GM12878 (cell line): ENCODE measurements at regions of chr2 and their contacts with region 1.

Region 1: DNA sequence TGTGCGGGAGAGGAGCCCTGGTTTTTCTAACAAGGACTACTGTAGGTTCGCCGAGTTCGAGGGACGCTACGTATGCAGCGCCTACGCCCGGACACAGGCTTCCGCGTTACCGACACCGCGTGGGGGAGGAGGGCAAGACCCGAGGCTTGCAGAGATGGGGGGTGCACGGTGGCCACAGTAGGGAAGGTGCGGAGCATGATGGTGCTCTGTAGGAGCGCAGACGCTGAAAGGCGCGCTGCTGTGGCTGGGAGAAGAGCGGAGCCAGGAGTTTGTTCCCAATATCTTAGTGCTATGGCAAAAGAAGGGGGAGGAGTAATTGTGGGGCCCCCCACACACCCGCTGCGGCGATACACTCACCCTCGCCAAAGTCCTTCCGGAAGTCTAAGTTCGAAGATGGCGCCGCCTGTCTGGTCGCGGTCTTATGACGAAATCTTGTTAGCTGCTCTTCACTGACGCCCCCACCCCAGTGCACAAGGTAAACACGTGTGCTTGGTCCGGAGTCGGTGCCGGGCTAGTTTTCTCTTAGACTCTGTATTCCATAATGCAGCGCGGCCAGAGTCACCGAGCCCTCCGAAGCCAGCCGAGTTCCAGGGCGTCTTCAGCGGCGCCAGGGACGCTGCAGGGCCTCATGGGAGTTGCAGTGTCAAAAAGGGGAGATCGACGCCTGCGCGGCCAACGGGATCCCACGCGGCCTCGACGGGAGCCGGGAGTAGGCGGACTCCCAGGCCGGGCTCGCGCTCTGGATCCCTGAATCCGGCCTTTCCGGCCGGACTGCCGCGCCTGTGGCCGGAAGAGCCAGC is at the start of gene GTF3C2:
- DNase-seq: peak; percentile 88
- ATAC-seq: peak; percentile 91
- H3K4me3 ChIP-seq: peak within 1 kb of the TSS; percentile 97
- H3K27ac ChIP-seq: peak within 1 kb of the TSS; percentile 96
- H3K4me1 ChIP-seq: no peaks in the 10 kb centered on the region; the same call in 1 of the 2 replicates
- H3K27me3 ChIP-seq: no peaks in the 10 kb centered on the region
- CTCF ChIP-seq: no peak
- EP300 ChIP-seq: no peak
- POLR2A ChIP-seq: peak; percentile 81
- RAD21 ChIP-seq: no peak
- polyA plus RNA-seq, gene GTF3C2: 45.9 to 59.0 TPM

Region 2: DNA sequence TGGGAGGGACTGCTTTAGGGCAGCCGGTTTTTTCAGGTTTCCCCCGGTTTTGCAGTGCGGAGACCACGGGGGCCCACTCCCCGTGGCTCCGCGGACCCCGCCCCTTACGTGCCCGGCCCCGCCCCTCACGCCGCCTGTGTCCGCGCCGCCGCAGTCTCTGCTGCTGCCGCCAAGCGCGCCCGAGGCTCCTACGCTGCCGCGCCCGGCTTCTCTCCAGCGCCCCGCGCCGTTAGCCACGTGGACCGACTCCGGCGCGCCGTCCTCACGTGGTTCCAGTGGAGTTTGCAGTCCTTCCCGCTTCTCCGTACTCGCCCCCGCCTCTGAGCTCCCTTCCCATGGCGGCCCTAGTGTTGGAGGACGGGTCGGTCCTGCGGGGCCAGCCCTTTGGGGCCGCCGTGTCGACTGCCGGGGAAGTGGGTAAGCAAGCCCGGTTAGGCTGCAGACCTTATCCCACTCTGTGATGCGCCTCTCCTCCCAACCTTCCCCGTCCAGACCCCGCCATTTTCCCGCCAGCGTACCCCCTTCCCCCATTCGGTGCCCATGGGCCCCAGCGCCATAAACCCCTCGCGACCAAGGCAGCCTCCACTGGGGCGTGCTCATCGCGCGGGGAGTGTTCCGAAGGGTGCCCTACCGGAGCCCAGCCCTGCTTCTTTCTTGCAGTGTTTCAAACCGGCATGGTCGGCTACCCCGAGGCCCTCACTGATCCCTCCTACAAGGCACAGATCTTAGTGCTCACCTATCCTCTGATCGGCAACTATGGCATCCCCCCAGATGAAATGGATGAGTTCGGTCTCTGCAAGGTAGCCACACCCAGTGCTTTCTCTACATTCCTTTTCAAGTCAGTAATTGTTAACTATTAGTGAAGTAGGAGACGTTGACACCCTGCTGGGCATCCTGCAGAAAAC is 139.1 kb before region 1 on chr2 and contains the start of gene CAD:
- CTCF ChIA-PET with region 1: no interaction called
- POLR2A ChIA-PET with region 1: no interaction called
- RAD21 ChIA-PET with region 1: no interaction called
- SMC1A ChIA-PET with region 1: no interaction called
- in situ Hi-C with region 1: no loop called
- intact Hi-C with region 1: loop called (anchors 10 kb)
- DNase-seq: no peak
- ATAC-seq: peak; percentile 93
- H3K4me3 ChIP-seq: peak within 1 kb of the TSS; percentile 79
- H3K27ac ChIP-seq: peak within 1 kb of the TSS; percentile 83
- H3K4me1 ChIP-seq: peaks cover 3% of the 10 kb centered on the region; the same call in 1 of the 2 replicates
- H3K27me3 ChIP-seq: no peaks in the 10 kb centered on the region
- CTCF ChIP-seq: peak in 2 of 3 experiments; percentile 19 to 35; a peak in 3 of 6 replicates
- EP300 ChIP-seq: no peak
- POLR2A ChIP-seq: peak; percentile 91
- RAD21 ChIP-seq: no peak
- polyA plus RNA-seq, gene CAD: 7.6 to 12.1 TPM